Activated T-helper 2 cell treated with anti-CD3 and anti-CD28 coated beads, Interferon-gamma antibody, Interleukin-2, Interleukin-4, amounts not matched to agents 10 μg/mL and 5 μg/mL and 100 μg/mL, durations not matched to agents 14 hours and 24 hours and 36 hours (primary cell): ENCODE measurements at regions of chr1 and their contacts with region 1.

Region 1: DNA sequence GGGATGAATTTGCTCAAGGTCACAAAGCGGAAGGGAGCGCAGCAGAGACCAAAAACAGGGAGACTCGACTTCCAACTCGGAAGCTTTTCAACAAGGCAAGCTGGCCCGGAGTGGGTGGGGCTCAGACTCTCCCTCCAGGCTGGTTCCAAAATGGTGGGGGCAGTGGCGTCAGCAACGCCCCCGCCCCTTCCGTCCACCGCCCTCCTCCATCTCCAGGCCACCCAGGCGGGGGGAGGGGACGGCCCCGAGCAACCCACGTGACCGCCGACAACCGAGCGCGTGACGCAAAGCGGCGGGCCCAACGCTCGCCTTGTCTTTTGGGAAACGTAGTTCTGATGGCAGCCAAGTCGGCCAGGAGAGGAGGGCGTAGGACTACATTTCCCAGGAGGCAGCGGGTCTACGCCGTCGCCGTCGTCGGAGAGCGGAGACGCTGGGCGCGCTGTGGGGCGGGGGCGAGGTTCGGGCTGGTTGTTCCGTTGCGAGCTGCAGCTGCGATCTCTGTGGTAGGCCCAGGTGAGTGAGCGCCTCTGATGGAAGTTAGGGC is at the start of gene THRAP3:
- DNase-seq: peak; percentile 100
- H3K4me3 Mint-ChIP-seq: peak within 1 kb of the TSS; percentile 96
- H3K27ac Mint-ChIP-seq: peak within 1 kb of the TSS; percentile 100
- H3K4me1 Mint-ChIP-seq: peaks cover 24% of the 10 kb centered on the region
- H3K27me3 Mint-ChIP-seq: no peaks in the 10 kb centered on the region
- total RNA-seq, gene THRAP3: 159 and 164 TPM in 2 replicates

Region 2: DNA sequence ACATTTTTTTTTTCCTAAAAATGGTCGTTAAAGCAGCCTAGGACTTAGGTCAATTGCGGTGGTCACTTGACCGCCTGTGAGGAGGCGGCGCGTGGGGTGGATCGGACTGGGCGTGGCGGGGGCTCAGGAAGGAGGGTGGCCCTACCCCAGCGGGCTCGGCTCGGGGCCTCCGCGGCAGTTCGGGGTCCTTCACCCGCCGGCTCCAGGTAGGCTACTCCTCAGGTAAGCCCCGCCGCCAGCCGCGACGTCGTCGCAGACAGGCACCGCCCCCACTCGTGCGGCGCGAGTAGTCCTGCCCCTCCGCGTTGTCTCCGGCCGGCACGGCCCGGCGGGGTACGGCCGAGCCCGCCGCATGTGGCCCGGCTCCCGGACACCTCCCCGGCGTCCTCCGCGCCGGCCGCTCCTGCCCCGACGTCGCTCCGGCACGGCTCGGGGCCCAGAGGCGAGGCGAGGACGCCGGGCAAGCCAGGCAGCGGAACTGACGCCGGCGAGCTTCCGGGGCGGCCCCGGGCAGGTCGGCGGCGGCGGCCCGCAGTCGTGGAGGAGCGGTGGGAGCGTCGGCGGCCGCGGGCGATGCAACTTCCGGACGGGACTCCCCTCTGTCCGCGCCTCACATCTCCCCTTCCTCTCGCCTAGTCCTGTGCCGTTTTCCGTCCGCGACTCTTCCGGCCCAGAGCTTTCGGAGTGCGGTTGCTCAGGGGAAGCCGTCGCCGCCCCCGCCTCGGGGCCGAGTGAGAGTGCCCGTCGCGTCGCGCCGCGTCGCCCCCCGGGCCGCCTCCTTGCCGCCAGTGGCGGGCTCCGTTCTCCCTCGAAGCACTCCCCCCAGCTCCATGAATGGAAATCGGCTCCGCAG is 293.2 kb before region 1 on chr1 and contains the start of gene AGO3:
- intact Hi-C with region 1: loop called (anchors 5 kb)
- DNase-seq: peak; percentile 86
- H3K4me3 Mint-ChIP-seq: peak within 1 kb of the TSS; percentile 90
- H3K27ac Mint-ChIP-seq: peak within 1 kb of the TSS; percentile 96
- H3K4me1 Mint-ChIP-seq: peaks cover 27% of the 10 kb centered on the region
- H3K27me3 Mint-ChIP-seq: no peaks in the 10 kb centered on the region
- total RNA-seq, gene AGO3: 21.2 and 26.7 TPM in 2 replicates

Region 3: DNA sequence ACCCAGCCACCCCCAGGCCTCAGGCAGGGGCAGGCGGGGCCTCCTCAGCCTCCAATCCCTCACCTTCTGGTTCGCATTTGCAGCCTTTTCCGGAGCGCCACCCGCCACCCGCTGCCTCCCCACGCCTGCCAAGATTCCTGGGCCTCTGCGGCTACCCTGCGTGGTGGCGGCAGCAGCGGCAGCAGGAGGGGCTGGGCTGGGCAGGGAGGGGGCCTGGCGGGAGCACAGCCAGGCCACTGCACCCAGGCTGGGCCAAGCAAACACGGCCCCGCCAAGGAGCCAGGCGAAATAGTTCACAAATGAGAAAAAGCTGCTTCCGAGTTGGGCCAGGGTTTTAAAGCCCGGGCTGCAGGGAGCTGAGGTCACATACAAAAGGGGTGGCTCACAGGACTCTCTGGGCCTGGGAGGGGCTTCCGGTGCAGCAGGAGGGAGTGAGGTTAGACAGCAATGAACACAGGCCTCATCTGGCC is 108.8 kb before region 1 on chr1:
- intact Hi-C with region 1: no loop called
- DNase-seq: no peak
- H3K4me3 Mint-ChIP-seq: no peak overlapping the region
- H3K27ac Mint-ChIP-seq: no peak overlapping the region
- H3K4me1 Mint-ChIP-seq: peaks cover 4% of the 10 kb centered on the region
- H3K27me3 Mint-ChIP-seq: no peaks in the 10 kb centered on the region

Region 4: DNA sequence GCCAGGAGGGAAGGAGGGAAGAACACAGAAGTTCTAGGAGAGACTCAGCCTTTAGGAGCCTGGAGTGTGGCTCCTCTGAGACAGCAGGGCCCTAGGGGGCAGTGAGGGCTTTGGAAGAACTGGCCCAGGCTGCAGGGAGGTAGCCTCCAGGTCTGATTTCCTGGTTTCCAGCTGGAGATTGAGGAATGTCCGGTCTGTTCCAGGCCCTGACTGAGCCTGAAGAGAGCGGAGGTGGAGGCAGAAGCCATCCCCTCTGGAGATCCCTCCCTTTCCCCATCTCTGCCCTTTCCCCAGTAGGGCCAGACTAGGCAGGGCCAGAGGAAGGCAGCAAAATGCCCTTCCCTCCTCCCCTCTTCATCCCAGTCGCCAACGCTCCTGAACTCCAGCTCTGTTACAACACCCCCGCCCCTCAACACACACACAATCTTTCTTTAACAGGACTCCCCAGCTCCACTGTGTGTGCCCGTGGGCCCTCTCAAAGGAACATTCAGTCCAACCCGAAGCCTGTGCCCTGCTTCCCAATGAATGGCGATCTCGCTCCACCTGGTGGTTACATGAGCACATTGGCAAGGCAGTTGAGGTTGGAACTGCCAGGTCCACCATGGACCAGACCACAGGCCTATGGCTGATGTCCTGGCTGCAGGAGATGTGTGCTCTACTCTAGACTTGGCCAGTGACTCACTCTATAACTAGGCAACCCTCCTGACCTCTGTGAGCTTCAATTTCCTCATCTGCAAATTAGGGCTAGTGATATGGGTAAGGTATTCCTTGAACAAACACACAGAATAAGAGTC is 36.1 kb before region 1 on chr1:
- intact Hi-C with region 1: loop called (anchors 5 kb)
- DNase-seq: peak; percentile 69
- H3K4me3 Mint-ChIP-seq: no peak overlapping the region
- H3K27ac Mint-ChIP-seq: peak overlapping the region; percentile 70
- H3K4me1 Mint-ChIP-seq: peaks cover 5% of the 10 kb centered on the region
- H3K27me3 Mint-ChIP-seq: no peaks in the 10 kb centered on the region

Region 5: GRCh38 chr1:36285448-36286101 is 61.5 kb after region 1 on chr1:
- intact Hi-C with region 1: loop called (anchors 5 kb)
- DNase-seq: peak; percentile 51
- H3K4me3 Mint-ChIP-seq: no peak overlapping the region
- H3K27ac Mint-ChIP-seq: peak overlapping the region; percentile 73
- H3K4me1 Mint-ChIP-seq: peaks cover 27% of the 10 kb centered on the region
- H3K27me3 Mint-ChIP-seq: no peaks in the 10 kb centered on the region

Region 6: GRCh38 chr1:36300526-36300925 is 76.5 kb after region 1 on chr1:
- intact Hi-C with region 1: loop called (anchors 1 kb)
- DNase-seq: no peak
- H3K4me3 Mint-ChIP-seq: no peak overlapping the region
- H3K27ac Mint-ChIP-seq: peak overlapping the region; percentile 66
- H3K4me1 Mint-ChIP-seq: peaks cover 34% of the 10 kb centered on the region
- H3K27me3 Mint-ChIP-seq: no peaks in the 10 kb centered on the region

Region 7: DNA sequence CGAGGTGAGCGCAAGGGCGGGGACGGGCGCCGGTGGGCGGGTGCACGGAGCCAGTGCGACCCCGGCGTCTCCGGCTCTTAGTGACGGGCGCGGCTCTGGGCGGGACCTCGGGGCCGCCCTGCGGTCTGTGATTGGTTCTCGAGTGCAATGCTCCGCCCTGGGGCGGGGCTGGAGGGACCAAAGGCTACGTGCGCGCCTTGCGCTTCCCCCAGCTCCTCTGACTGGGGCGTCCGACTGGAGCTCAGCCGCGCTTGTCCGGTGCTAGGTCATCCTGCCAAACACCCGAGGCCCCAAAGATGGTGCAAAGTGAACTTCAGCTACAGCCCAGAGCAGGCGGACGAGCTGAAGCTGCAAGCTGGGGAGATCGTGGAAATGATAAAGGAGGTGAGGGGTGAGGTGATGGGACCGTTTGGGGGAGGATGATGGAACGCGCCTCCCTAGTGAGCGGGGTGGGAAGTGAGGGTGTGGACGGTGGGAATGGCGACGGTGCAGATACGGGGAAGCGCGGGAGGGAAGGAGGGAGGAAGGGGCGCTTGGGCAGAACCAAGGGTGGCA is 82.9 kb after region 1 on chr1:
- intact Hi-C with region 1: loop called (anchors 2 kb)
- DNase-seq: peak; percentile 93
- H3K4me3 Mint-ChIP-seq: peak overlapping the region; percentile 99
- H3K27ac Mint-ChIP-seq: peak overlapping the region; percentile 95
- H3K4me1 Mint-ChIP-seq: peaks cover 37% of the 10 kb centered on the region
- H3K27me3 Mint-ChIP-seq: no peaks in the 10 kb centered on the region

Region 8: GRCh38 chr1:36385410-36386257 is 161.6 kb after region 1 on chr1 and contains the start of gene STK40:
- intact Hi-C with region 1: loop called (anchors 1 kb)
- DNase-seq: peak; percentile 97
- H3K4me3 Mint-ChIP-seq: peak within 1 kb of the TSS; percentile 91
- H3K27ac Mint-ChIP-seq: peak within 1 kb of the TSS; percentile 94
- H3K4me1 Mint-ChIP-seq: peaks cover 37% of the 10 kb centered on the region
- H3K27me3 Mint-ChIP-seq: no peaks in the 10 kb centered on the region
- total RNA-seq, gene STK40: 41.3 and 42.4 TPM in 2 replicates

Region 9: DNA sequence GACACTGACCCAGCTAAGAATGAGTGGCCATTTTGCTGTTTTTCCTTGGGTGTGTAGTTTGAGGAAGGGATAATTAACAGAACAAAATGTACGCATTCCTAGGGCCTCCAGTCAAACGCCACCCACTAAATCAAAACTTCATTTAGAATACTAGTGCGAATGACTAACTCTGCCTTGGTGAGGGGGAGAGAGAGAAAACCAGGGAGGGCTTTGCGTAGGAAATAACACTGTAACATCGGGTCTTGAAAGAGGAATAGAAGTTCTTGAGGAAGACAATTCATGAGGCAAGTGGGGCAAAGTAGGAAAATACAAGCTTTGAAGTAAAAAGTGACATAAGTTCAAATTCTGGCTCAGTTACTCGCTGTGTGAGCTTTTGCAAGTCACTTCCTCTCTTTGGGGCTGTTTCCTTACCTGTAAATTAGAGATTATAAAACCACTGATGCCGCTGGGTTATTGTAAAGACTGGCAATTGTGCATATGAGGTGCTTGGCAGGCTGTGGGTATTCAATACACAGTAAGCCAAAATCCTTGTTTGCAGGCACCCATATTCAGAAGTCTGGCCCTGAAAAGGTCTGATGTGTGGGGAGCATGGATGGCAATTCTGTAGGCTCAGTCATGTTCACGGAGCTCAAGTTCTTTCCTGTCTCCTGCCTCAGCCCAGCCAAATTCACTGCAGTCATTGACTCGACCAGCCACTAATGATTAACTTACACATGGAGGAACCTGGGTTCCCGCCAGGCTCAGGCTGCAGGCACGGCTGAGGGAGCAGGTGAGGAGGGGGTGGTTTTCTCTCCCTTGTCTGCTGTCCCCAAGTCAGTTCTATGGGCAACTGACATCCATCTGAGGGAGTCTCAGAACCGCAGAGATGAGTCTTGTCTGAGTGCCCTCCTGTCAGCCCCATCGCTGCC is 398.9 kb after region 1 on chr1:
- intact Hi-C with region 1: no loop called
- DNase-seq: no peak
- H3K4me3 Mint-ChIP-seq: no peak overlapping the region
- H3K27ac Mint-ChIP-seq: no peak overlapping the region
- H3K4me1 Mint-ChIP-seq: no peaks in the 10 kb centered on the region
- H3K27me3 Mint-ChIP-seq: no peaks in the 10 kb centered on the region